ENCODE measurements at regions of chr22 and their contacts with region 1.

Region 1: DNA sequence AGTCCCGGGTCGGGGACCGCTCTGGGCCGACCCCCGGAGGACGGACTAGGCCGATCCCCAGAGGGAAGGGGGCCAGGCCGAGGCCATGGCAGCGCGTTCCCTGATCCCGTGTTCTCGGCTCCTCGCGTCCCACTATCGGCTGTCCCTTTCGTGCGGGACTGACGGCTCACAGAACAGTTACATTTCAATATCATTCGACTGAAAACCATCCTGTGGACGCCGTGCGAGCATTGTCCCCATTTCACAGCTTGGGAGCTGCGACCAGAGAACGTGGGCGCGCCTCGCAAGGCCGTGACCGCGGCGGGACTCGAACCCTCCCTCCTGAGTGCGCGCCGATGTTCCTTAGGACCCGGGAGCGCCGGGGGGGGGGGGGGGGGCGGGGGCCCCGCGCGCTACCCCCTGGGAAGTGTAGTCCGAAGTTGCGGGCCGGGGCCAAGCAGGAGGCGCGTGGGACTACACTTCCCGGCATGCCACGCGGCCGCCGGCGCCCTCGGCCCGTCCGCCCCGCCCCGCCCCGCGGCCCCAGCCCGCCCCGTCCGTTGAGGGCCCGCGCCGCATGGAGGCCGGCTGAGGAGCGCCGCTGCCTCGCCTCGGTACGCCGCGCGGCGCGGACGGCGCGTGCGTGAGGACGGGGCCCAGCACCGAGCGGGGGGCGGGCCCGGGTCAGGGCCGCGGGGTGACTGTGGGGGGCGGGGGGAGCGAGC is at the start of gene TRABD:
- DNase-seq: peak; percentile 92
- ATAC-seq: peak; percentile 60
- H3K4me3 ChIP-seq: peak within 1 kb of the TSS; percentile 52 to 76 (median 61)
- H3K4me3 Mint-ChIP-seq: peak within 1 kb of the TSS; percentile 90
- H3K27ac ChIP-seq: peak within 1 kb of the TSS; percentile 38 to 71
- H3K27ac Mint-ChIP-seq: peak within 1 kb of the TSS; percentile 86
- H3K4me1 ChIP-seq: peaks cover 50 to 54% of the 10 kb centered on the region in 2 donors
- H3K4me1 Mint-ChIP-seq: peaks cover 36% of the 10 kb centered on the region
- H3K27me3 ChIP-seq: peaks cover 0 to 17% (median 2%) of the 10 kb centered on the region in 4 experiments
- H3K27me3 Mint-ChIP-seq: no peaks in the 10 kb centered on the region
- CTCF ChIP-seq: no peak
- total RNA-seq, gene TRABD: 200 and 205 TPM in 2 replicates

Region 2: DNA sequence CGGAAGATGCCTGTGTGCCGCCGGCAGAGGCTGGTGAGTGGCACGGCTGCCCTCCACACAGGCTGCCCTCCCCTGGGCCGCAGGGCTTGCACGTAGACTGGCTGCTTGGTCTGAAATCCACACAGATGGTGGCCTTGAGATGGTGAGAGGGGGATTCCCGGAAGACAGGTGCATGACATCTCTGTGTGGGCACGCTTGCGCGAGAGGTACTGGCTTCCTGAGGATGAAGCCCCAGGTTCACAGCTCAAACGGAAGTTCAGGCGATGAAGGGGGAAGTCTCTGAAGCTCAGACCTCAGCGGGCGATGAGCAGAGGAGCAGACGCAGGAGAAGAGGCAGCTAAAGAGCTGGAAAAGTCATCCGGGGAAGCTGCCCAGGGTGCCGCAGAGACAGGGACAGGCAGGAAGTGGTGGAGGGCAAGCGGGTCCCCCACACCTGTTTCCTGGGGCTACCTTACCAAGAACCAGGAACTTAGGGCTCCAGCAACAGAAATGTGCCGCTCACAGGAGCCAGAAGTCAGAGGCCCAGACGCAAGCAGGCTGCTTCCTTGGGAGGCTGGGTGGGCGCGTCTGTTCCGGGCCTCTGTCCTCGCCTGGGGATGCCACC is 259.9 kb before region 1 on chr22:
- CTCF ChIA-PET with region 1: interaction called, 12 read pairs
- POLR2A ChIA-PET with region 1: interaction called, 19 read pairs
- intact Hi-C with region 1: loop called (anchors 2 kb)
- DNase-seq: peak; percentile 96
- ATAC-seq: peak; percentile 74
- H3K4me3 ChIP-seq: peak overlapping the region in 4 of 5 experiments; percentile 37 to 53 (median 44)
- H3K4me3 Mint-ChIP-seq: peak overlapping the region; percentile 87
- H3K27ac ChIP-seq: peak overlapping the region; percentile 95 to 98
- H3K27ac Mint-ChIP-seq: peak overlapping the region; percentile 98
- H3K4me1 ChIP-seq: peaks cover 48 to 57% of the 10 kb centered on the region in 2 donors
- H3K4me1 Mint-ChIP-seq: peaks cover 55% of the 10 kb centered on the region
- H3K27me3 ChIP-seq: no peaks in the 10 kb centered on the region
- H3K27me3 Mint-ChIP-seq: no peaks in the 10 kb centered on the region
- CTCF ChIP-seq: no peak

Region 3: DNA sequence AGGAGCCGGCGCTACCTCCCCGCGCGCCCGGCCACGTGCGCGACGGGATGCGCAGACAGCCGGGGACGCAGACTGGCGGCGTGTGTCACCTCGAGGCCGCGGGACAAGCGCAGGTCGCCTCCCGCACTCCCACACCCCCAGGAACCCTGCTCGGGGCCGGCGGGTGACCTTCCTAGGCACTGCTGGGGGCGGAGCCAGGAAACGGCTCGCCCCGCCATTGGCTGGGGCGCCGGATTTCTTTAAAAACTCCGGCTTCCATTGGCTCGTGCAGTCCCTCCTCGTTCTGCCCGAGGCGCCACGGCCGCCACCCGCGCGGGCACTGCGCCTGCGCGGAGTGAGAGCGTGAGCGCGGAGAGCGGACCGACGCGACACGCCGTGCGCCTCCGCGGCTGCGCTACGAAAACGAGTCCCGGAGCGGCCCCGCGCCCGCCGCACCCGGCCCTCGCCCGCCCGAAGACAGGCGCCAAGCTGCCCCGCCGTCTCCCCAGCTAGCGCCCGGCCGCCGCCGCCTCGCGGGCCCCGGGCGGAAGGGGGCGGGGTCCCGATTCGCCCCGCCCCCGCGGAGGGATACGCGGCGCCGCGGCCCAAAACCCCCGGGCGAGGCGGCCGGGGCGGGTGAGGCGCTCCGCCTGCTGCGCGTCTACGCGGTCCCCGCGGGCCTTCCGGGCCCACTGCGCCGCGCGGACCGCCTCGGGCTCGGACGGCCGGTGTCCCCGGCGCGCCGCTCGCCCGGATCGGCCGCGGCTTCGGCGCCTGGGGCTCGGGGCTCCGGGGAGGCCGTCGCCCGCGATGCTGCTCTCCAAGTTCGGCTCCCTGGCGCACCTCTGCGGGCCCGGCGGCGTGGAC is 225.2 kb before region 1 on chr22 and contains the start of gene PIM3:
- CTCF ChIA-PET with region 1: no interaction called
- POLR2A ChIA-PET with region 1: interaction called, 15 read pairs
- intact Hi-C with region 1: loop called (anchors 2 kb)
- DNase-seq: peak; percentile 98
- ATAC-seq: peak; percentile 78
- H3K4me3 ChIP-seq: peak within 1 kb of the TSS; percentile 65 to 88 (median 77)
- H3K4me3 Mint-ChIP-seq: peak within 1 kb of the TSS; percentile 91
- H3K27ac ChIP-seq: peak within 1 kb of the TSS; percentile 85 to 94
- H3K27ac Mint-ChIP-seq: peak within 1 kb of the TSS; percentile 91
- H3K4me1 ChIP-seq: peaks cover 22 to 36% of the 10 kb centered on the region in 2 donors
- H3K4me1 Mint-ChIP-seq: peaks cover 38% of the 10 kb centered on the region
- H3K27me3 ChIP-seq: no peaks in the 10 kb centered on the region
- H3K27me3 Mint-ChIP-seq: no peaks in the 10 kb centered on the region
- CTCF ChIP-seq: no peak
- total RNA-seq, gene PIM3: 127 and 128 TPM in 2 replicates

Region 4: DNA sequence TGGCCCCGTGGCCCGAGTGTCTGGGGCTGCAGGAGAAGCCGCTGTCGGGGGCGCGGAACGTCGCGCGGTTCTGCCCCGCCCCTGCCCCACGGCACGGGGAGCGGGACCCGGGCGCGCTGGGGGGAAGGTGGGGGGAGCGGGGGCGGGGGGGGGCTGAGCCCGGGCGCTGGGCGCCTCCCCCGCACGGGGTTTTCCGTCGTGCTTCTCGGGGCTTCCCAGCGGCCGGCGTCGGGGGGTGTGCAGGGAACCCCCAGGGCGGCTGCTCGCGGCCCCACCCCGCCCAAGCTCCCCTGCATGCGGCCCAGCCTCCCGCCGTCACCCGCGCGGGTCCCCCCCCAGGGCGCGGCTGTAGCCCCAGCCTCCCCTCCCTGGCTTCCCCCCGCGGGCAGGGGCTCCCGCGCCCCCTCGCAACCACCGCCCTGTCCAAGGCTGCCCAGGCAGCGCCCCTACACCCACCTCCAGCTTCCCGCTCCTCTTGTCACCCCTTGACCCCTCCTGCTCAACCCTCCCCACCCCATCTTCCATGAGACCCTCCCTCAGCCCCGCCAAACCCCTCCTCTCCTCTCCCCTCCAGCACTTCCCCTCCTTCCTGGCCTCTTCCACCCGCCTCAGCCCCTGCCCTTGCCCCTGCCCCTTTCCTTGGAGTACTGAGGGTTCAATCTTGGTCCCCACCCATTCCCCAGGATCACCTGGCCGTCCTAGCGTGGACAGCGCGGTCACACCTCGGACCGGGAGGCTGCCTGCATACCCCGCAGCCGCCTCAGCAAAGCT is 174.7 kb before region 1 on chr22:
- CTCF ChIA-PET with region 1: no interaction called
- POLR2A ChIA-PET with region 1: no interaction called
- intact Hi-C with region 1: no loop called
- DNase-seq: peak; percentile 90
- ATAC-seq: peak; percentile 85
- H3K4me3 ChIP-seq: peak overlapping the region in 4 of 5 experiments; percentile 31 to 56 (median 46)
- H3K4me3 Mint-ChIP-seq: peak overlapping the region; percentile 82
- H3K27ac ChIP-seq: peak overlapping the region in 1 of 2 donors; percentile 55
- H3K27ac Mint-ChIP-seq: peak overlapping the region; percentile 84
- H3K4me1 ChIP-seq: peaks cover 39 to 43% of the 10 kb centered on the region in 2 donors
- H3K4me1 Mint-ChIP-seq: peaks cover 30% of the 10 kb centered on the region
- H3K27me3 ChIP-seq: peaks cover 0 to 24% (median 10%) of the 10 kb centered on the region in 4 experiments
- H3K27me3 Mint-ChIP-seq: no peaks in the 10 kb centered on the region
- CTCF ChIP-seq: no peak

Region 5: DNA sequence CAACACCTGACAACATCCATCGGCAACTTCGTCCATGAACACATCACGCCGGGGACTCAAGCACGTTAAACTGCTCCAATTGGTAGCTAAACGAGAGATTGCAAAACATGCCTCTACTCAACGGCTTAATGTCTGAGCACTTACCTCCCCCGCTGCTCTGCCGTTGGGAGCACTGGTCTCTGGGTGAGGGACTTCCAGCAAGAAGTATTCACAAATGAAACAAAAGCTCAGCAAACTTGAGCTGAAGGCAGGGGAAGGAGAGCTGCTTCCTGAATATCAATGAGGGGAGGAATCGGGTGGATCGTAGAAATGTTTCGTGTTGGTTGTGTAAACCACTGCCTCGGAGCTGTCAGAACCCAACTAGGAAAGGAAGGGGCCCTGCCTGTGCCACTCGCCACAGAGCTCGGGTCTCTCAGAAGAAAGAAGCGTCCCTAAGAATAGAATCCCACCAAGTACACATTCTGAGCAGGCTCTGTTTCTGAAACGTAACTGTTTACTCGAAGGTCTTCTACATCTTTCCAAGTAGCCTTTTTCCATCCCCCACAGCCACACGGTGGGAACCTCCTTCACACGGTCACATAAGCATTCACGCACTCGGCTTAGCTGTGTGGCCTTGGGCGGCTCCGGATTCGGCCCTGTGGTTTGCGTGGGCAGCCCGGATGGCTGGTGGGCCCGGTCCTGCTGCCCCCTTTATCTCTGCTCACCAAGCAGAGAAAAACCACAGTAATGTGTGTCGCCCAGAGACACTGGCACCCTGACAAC is 100.1 kb before region 1 on chr22 and contains the start of gene MLC1:
- CTCF ChIA-PET with region 1: no interaction called
- POLR2A ChIA-PET with region 1: no interaction called
- intact Hi-C with region 1: no loop called
- DNase-seq: peak; percentile 38
- ATAC-seq: no peak
- H3K4me3 ChIP-seq: peak within 1 kb of the TSS in 4 of 5 experiments; percentile 8 to 54 (median 32)
- H3K4me3 Mint-ChIP-seq: peak within 1 kb of the TSS; percentile 62
- H3K27ac ChIP-seq: no peak within 1 kb of the TSS
- H3K27ac Mint-ChIP-seq: no peak within 1 kb of the TSS
- H3K4me1 ChIP-seq: no peaks in the 10 kb centered on the region
- H3K4me1 Mint-ChIP-seq: peaks cover 3% of the 10 kb centered on the region
- H3K27me3 ChIP-seq: peaks cover 0 to 42% (median 8%) of the 10 kb centered on the region in 4 experiments
- H3K27me3 Mint-ChIP-seq: peaks cover 23% of the 10 kb centered on the region
- CTCF ChIP-seq: no peak
- total RNA-seq, gene MLC1: not detected in 2 replicates

Region 6: GRCh38 chr22:50170453-50171318 is 14.8 kb before region 1 on chr22 and contains the start of gene PANX2:
- CTCF ChIA-PET with region 1: interaction called, 13 read pairs
- POLR2A ChIA-PET with region 1: interaction called, 54 read pairs
- intact Hi-C with region 1: loop called (anchors 1 kb)
- DNase-seq: peak; percentile 26
- ATAC-seq: no peak
- H3K4me3 ChIP-seq: peak within 1 kb of the TSS in 2 of 5 experiments; percentile 25 to 33
- H3K4me3 Mint-ChIP-seq: peak within 1 kb of the TSS; percentile 77
- H3K27ac ChIP-seq: no peak within 1 kb of the TSS
- H3K27ac Mint-ChIP-seq: peak within 1 kb of the TSS; percentile 68
- H3K4me1 ChIP-seq: peaks cover 25 to 27% of the 10 kb centered on the region in 2 donors
- H3K4me1 Mint-ChIP-seq: peaks cover 22% of the 10 kb centered on the region
- H3K27me3 ChIP-seq: peaks cover 0 to 27% (median 18%) of the 10 kb centered on the region in 4 experiments
- H3K27me3 Mint-ChIP-seq: peaks cover 23% of the 10 kb centered on the region
- CTCF ChIP-seq: no peak
- total RNA-seq, gene PANX2: 0.53 and 0.59 TPM in 2 replicates

Region 7: GRCh38 chr22:50244420-50245213 is 59.1 kb after region 1 on chr22 and contains the start of gene TUBGCP6:
- CTCF ChIA-PET with region 1: no interaction called
- POLR2A ChIA-PET with region 1: interaction called, 8 read pairs
- intact Hi-C with region 1: loop called (anchors 2 kb)
- DNase-seq: peak; percentile 96
- ATAC-seq: peak; percentile 81
- H3K4me3 ChIP-seq: peak within 1 kb of the TSS; percentile 65 to 99 (median 90)
- H3K4me3 Mint-ChIP-seq: peak within 1 kb of the TSS; percentile 96
- H3K27ac ChIP-seq: peak within 1 kb of the TSS; percentile 91 to 96
- H3K27ac Mint-ChIP-seq: peak within 1 kb of the TSS; percentile 99
- H3K4me1 ChIP-seq: peaks cover 33 to 66% of the 10 kb centered on the region in 2 donors
- H3K4me1 Mint-ChIP-seq: peaks cover 40% of the 10 kb centered on the region
- H3K27me3 ChIP-seq: no peaks in the 10 kb centered on the region
- H3K27me3 Mint-ChIP-seq: no peaks in the 10 kb centered on the region
- CTCF ChIP-seq: no peak
- total RNA-seq, gene TUBGCP6: 137 and 139 TPM in 2 replicates

Region 8: DNA sequence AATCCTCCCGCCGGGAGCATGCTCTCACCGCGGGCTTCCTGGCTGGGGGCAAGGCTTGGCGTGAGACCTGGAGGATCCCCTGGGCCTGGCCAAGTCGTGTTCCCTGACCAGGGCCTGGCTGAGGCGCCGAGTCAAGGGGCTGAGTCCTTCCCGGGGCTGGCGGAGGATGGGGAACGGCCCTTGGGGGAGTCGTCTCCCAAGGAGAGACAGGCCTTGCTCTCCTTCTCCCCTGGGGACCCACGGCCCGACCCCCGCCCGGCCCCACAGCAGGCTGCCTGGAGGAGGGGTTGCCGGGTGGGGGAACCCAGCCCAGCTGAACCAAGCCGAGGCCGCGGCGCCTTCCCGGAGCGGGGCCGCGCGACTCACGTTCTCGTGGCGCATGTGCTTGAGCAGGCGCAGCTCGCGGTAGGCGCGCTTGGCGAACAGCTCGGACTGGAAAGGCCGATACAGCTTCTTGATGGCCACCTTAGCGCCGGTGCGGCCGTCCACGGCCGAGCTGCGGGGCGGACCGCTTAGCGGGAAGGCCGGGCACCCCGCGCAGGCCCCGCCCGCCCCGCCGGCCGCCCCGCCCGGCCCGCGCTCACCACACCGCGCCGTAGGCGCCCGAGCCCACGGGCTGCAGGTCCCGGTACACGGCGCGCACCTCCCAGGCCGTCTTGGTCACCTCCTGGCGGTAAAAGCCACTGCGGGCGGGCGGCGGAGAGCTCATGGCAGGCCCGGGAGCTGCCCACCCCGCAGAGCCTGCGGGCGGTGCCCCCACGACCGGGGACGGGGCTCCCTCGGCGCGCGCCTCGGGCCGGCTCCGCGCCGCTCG is 75.5 kb after region 1 on chr22:
- CTCF ChIA-PET with region 1: no interaction called
- POLR2A ChIA-PET with region 1: no interaction called
- intact Hi-C with region 1: no loop called
- DNase-seq: no peak
- ATAC-seq: peak; percentile 28
- H3K4me3 ChIP-seq: peak overlapping the region in 3 of 5 experiments; percentile 5 to 36 (median 33)
- H3K4me3 Mint-ChIP-seq: peak overlapping the region; percentile 45
- H3K27ac ChIP-seq: no peak overlapping the region
- H3K27ac Mint-ChIP-seq: no peak overlapping the region
- H3K4me1 ChIP-seq: peaks cover 17 to 21% of the 10 kb centered on the region in 2 donors
- H3K4me1 Mint-ChIP-seq: peaks cover 13% of the 10 kb centered on the region
- H3K27me3 ChIP-seq: peaks cover 0 to 31% (median 8%) of the 10 kb centered on the region in 4 experiments
- H3K27me3 Mint-ChIP-seq: peaks cover 10% of the 10 kb centered on the region
- CTCF ChIP-seq: no peak

Measured in B cell (primary cell).